ENCODE measurements at regions of chr3 and their contacts with region 1.

Region 1: DNA sequence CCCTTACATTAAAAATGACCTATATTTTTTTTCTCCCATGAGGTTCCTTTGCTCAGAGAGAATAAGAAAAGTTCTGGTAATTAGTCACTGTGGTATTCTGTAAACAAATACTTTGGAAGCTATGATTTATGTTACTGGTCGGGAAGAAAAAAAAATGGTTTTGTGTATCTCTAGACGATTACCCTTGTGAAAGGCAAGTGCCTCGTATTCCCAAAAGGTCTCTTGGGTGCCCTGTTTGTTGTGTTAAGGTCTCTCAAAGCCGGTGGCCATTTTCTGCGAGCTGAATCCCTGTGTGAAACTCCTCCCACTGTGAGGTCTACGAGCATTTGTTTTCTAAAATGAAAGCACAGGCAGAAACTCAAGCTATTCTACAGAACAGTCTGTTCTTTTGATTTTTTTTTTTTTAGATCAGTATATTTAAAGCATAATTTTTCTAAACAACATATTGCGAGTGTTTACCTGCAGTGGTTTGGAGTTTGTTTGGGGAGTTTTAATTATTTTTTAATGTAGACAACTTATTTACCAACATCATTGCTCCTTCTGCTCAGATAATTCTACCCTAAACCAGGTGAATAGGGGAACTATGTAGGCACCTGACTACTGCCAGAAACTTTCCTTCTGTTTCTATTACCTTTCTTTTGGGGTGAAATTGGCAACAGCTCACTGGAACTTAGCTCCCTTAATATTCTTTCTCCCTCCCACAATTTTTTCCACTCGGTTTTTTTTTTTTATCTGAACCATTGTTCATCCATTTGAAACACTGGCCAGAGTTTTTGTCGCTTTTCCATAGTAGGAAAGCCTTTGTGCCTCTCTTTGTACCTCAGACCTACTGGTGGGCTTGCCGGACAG is 44.0 kb downstream of the ZBTB38 start:
- DNase-seq: peak; percentile 55
- H3K4me3 Mint-ChIP-seq: peak overlapping the region; percentile 85
- H3K27ac Mint-ChIP-seq: peak overlapping the region; percentile 98
- H3K4me1 Mint-ChIP-seq: peaks cover 61% of the 10 kb centered on the region
- H3K27me3 Mint-ChIP-seq: no peaks in the 10 kb centered on the region

Region 2: GRCh38 chr3:141129541-141130011 is 282.7 kb before region 1 on chr3:
- intact Hi-C with region 1: no loop called
- DNase-seq: no peak
- H3K4me3 Mint-ChIP-seq: no peak overlapping the region
- H3K27ac Mint-ChIP-seq: no peak overlapping the region
- H3K4me1 Mint-ChIP-seq: no peaks in the 10 kb centered on the region
- H3K27me3 Mint-ChIP-seq: peaks cover 4% of the 10 kb centered on the region

Region 3: GRCh38 chr3:141360888-141361598 is 51.3 kb before region 1 on chr3:
- intact Hi-C with region 1: loop called (anchors 2 kb)
- DNase-seq: no peak
- H3K4me3 Mint-ChIP-seq: no peak overlapping the region
- H3K27ac Mint-ChIP-seq: no peak overlapping the region
- H3K4me1 Mint-ChIP-seq: peaks cover 10% of the 10 kb centered on the region
- H3K27me3 Mint-ChIP-seq: peaks cover 20% of the 10 kb centered on the region

Region 4: DNA sequence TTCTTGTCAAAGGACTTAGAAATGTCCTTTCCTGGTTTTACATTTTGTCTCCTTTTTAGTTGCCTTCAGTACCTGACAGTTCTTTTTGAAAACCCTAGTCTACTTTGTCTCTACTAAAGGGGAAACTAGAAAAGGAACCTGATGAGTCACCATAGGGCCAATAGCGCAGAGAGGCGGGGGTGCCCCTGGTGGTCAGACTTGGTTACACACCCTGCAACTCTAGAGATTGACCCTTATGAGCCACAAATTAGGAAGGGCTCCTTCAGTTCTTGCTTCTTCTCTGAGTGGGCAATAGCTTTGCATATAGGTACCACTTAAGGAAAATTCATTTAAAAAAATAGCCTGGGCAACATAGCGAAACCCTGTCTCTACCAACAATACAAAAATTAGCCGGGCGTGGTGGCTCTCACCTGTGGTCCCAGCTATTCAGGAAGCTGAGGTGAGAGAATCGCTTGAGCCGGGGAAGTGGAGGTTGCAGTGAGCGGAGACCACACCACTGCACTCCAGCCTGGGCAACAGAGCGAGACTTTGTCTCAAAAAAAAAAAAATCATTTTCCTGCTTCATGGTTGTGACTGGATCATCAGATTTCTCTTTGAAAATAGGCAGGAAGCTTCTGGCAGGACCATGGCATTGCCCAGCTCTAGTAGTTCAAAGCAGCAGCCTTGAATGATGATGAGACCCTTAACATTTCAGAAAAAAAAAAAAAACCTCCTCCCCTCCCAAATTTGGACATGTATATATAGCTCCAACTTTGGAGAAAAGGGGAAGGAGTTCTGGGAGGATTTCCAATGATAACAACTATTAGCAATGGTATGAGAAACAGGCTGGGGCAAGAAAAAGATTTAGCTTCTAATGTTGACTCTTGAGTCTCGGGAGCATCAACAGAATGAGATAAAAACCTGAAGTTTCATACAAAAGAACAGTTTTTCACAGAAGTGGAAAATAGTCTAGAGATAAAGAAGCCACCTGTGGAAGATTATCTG is 29.4 kb after region 1 on chr3:
- intact Hi-C with region 1: loop called (anchors 1 kb)
- DNase-seq: peak; percentile 59
- H3K4me3 Mint-ChIP-seq: no peak overlapping the region
- H3K27ac Mint-ChIP-seq: peak overlapping the region; percentile 3
- H3K4me1 Mint-ChIP-seq: peaks cover 17% of the 10 kb centered on the region
- H3K27me3 Mint-ChIP-seq: no peaks in the 10 kb centered on the region

Region 5: GRCh38 chr3:141553055-141553454 is 140.7 kb after region 1 on chr3:
- intact Hi-C with region 1: loop called (anchors 2 kb)
- DNase-seq: peak; percentile 35
- H3K4me3 Mint-ChIP-seq: peak overlapping the region; percentile 38
- H3K27ac Mint-ChIP-seq: peak overlapping the region; percentile 93
- H3K4me1 Mint-ChIP-seq: peaks cover 52% of the 10 kb centered on the region
- H3K27me3 Mint-ChIP-seq: no peaks in the 10 kb centered on the region

Measured in activated T-helper 1 cell treated with anti-CD3 and anti-CD28 coated beads, Interleukin-12 subunit alpha, Interleukin-12 subunit beta, Interleukin-2, Interleukin-4 antibody, amounts not matched to agents 30 ng/mL and 10 ng/mL and 1 ng/mL, durations not matched to agents 14 hours and 24 hours and 36 hours (primary cell).